CD4-positive, alpha-beta T cell (primary cell): ENCODE measurements at regions of chr1 and their contacts with region 1.

Region 1: DNA sequence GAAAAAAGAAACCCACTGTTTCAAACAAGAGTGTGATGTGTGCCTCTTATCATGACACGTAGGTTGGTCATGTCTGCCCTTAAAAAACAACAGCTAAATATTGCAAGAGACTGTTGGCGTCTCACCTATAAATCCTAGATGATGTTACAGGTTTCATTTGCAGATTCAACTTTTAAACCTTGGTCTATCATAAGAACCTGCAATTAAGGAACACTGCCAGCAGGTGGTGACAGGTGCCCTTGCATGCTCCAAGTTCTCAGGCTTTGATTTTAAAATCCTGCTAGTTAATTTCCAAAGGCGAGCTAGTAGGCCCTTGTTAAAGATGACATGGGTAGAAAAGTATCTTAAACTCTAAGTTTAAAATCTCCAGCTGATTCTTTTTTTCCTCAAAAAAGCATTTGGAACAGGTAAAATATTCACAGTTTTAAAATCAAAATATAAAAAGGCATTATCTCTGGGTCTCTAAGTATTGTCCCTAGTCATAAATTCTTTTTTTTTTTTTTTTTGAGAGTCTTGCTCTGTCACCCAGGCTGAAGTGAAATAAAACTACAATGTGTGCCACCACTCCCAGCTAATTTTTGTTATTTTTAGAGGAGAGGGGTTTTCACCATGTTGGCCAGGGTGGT is 39.1 kb downstream of the CLSTN1 start:
- DNase-seq: peak; percentile 39 to 86 (median 58)
- ATAC-seq: peak; percentile 45
- H3K4me3 ChIP-seq: no peak overlapping the region
- H3K4me3 Mint-ChIP-seq: peak overlapping the region; percentile 62
- H3K27ac ChIP-seq: no peak overlapping the region
- H3K27ac Mint-ChIP-seq: peak overlapping the region; percentile 79
- H3K4me1 ChIP-seq: peaks cover 21% of the 10 kb centered on the region
- H3K4me1 Mint-ChIP-seq: peaks cover 36% of the 10 kb centered on the region
- H3K27me3 ChIP-seq: no peaks in the 10 kb centered on the region
- H3K27me3 Mint-ChIP-seq: no peaks in the 10 kb centered on the region
- CTCF ChIP-seq: peak; percentile 83

Region 2: DNA sequence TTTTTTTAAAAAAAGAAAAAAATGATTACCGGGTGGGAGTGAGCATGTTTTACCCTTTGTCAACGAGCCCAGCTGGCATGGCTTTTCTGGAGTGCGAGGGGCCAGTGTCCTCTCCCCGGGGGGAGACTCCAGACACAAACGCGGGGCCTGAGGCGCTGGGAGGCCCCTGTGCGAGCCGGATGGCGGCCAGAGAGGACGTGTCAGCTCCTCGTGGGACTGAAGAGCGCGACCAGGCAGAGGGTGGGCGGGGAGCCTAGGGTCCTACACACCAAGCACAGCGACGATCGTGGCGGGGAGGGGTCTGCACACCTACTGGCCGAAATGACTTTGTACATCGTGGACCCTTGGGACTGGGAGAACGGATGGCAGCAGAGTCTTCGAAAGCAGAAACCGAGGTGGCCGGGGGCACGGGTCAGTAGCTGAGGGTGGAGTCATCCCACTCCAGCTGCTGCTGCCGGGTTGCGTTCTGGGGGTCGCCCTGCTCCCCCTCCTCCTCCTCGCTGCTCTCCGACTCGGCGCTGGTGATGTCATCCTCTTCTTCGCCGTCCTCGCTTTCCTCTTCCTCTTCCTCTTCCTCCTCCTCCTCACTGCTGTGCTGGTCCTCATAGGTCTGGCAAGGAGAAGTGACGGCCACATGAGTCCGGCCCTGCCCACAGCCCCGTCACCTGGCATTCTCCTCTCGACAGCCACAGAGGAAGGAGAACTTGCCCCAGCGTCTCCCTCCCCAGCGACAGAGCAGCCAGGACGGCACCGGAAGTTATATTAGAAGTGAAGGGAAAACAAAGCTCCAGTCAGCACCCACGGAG is 54.3 kb before region 1 on chr1:
- CTCF ChIA-PET with region 1: no interaction called
- POLR2A ChIA-PET with region 1: interaction called, 3 read pairs
- intact Hi-C with region 1: loop called in 1 of 2 experiments (anchors 1 kb)
- DNase-seq: peak in 3 of 14 experiments; percentile 35 to 63 (median 61)
- ATAC-seq: no peak
- H3K4me3 ChIP-seq: no peak overlapping the region
- H3K4me3 Mint-ChIP-seq: peak overlapping the region; percentile 81
- H3K27ac ChIP-seq: no peak overlapping the region
- H3K27ac Mint-ChIP-seq: peak overlapping the region; percentile 89
- H3K4me1 ChIP-seq: peaks cover 66% of the 10 kb centered on the region
- H3K4me1 Mint-ChIP-seq: peaks cover 68% of the 10 kb centered on the region
- H3K27me3 ChIP-seq: no peaks in the 10 kb centered on the region
- H3K27me3 Mint-ChIP-seq: no peaks in the 10 kb centered on the region
- CTCF ChIP-seq: no peak

Region 3: GRCh38 chr1:9798236-9799130 is 13.9 kb after region 1 on chr1:
- CTCF ChIA-PET with region 1: interaction called, 4 read pairs
- POLR2A ChIA-PET with region 1: interaction called, 16 read pairs
- intact Hi-C with region 1: no loop called
- DNase-seq: no peak
- ATAC-seq: no peak
- H3K4me3 ChIP-seq: no peak overlapping the region
- H3K4me3 Mint-ChIP-seq: peak overlapping the region; percentile 49
- H3K27ac ChIP-seq: no peak overlapping the region
- H3K27ac Mint-ChIP-seq: peak overlapping the region; percentile 57
- H3K4me1 ChIP-seq: peaks cover 43% of the 10 kb centered on the region
- H3K4me1 Mint-ChIP-seq: peaks cover 68% of the 10 kb centered on the region
- H3K27me3 ChIP-seq: no peaks in the 10 kb centered on the region
- H3K27me3 Mint-ChIP-seq: no peaks in the 10 kb centered on the region
- CTCF ChIP-seq: no peak

Region 4: GRCh38 chr1:9823943-9824701 is 39.5 kb after region 1 on chr1 and contains the start of gene CLSTN1:
- CTCF ChIA-PET with region 1: interaction called, 7 read pairs
- POLR2A ChIA-PET with region 1: interaction called, 4 read pairs
- intact Hi-C with region 1: loop called (anchors 2 kb)
- DNase-seq: peak; percentile 86 to 94 (median 90)
- ATAC-seq: peak; percentile 74
- H3K4me3 ChIP-seq: peak within 1 kb of the TSS; percentile 87
- H3K4me3 Mint-ChIP-seq: peak within 1 kb of the TSS; percentile 99
- H3K27ac ChIP-seq: peak within 1 kb of the TSS; percentile 57 to 67
- H3K27ac Mint-ChIP-seq: peak within 1 kb of the TSS; percentile 94
- H3K4me1 ChIP-seq: peaks cover 40% of the 10 kb centered on the region
- H3K4me1 Mint-ChIP-seq: peaks cover 43% of the 10 kb centered on the region
- H3K27me3 ChIP-seq: no peaks in the 10 kb centered on the region
- H3K27me3 Mint-ChIP-seq: no peaks in the 10 kb centered on the region
- CTCF ChIP-seq: no peak
- total RNA-seq, gene CLSTN1: 66.8 to 68.1 TPM

Region 5: DNA sequence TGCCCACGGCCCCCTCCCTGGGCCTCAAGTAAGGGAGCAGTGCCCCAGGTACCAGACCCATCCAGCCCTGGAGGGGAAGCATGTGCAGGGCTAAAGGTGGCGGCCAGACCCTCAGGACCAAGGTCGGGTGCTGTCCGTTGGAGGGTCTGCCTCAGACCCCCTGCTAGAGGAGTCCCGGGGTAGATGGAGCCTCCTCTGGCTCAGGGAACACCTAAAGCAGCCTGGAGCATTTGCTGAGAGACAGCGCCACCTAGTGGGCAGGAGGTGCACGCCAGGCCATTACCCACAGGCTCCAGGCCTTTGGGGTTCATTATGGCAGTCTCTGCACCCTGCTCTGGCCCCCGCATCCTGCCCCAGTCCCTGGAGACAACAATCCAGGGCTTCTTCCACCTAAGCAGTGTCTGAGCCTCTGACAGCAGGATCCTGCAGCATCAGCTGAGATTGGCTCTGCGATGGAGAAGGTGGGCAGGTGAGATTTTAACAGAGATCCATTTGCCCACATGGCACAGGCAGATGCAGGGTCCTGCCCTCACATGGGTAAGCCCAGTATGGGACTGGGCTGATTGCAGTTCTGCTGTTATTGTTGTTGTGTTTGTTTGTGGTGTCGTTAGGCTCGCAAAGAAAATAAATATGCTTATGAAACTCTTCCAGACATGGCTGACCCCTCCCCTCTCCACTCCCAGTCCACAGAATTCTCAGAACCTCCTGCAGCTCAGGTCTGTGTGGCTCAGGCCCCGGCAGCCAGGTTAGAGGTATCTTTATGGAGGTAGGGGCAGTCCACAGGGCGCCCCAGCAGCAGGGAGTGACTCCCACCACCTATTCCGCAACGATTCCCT is 83.0 kb after region 1 on chr1:
- CTCF ChIA-PET with region 1: interaction called, 70 read pairs
- POLR2A ChIA-PET with region 1: interaction called, 4 read pairs
- intact Hi-C with region 1: loop called (anchors 1 kb)
- DNase-seq: peak; percentile 80 to 94 (median 88)
- ATAC-seq: peak; percentile 100
- H3K4me3 ChIP-seq: no peak overlapping the region
- H3K4me3 Mint-ChIP-seq: no peak overlapping the region
- H3K27ac ChIP-seq: no peak overlapping the region
- H3K27ac Mint-ChIP-seq: no peak overlapping the region
- H3K4me1 ChIP-seq: peaks cover 10% of the 10 kb centered on the region
- H3K4me1 Mint-ChIP-seq: peaks cover 5% of the 10 kb centered on the region
- H3K27me3 ChIP-seq: no peaks in the 10 kb centered on the region
- H3K27me3 Mint-ChIP-seq: no peaks in the 10 kb centered on the region
- CTCF ChIP-seq: peak; percentile 94

Region 6: GRCh38 chr1:9942939-9943788 is 158.5 kb after region 1 on chr1 and contains the starts of genes LZIC and NMNAT1:
- CTCF ChIA-PET with region 1: no interaction called
- POLR2A ChIA-PET with region 1: no interaction called
- intact Hi-C with region 1: loop called in 1 of 2 experiments (anchors 10 kb)
- DNase-seq: peak; percentile 76 to 94 (median 85)
- ATAC-seq: peak; percentile 92
- H3K4me3 ChIP-seq: peak within 1 kb of the TSS; percentile 99
- H3K4me3 Mint-ChIP-seq: peak within 1 kb of the TSS; percentile 98
- H3K27ac ChIP-seq: peak within 1 kb of the TSS; percentile 73 to 90
- H3K27ac Mint-ChIP-seq: peak within 1 kb of the TSS; percentile 91
- H3K4me1 ChIP-seq: peaks cover 23% of the 10 kb centered on the region
- H3K4me1 Mint-ChIP-seq: peaks cover 20% of the 10 kb centered on the region
- H3K27me3 ChIP-seq: no peaks in the 10 kb centered on the region
- H3K27me3 Mint-ChIP-seq: no peaks in the 10 kb centered on the region
- CTCF ChIP-seq: no peak
- total RNA-seq, gene LZIC: 16.0 to 18.1 TPM
- total RNA-seq, gene NMNAT1: 0.66 to 1.0 TPM

Region 7: DNA sequence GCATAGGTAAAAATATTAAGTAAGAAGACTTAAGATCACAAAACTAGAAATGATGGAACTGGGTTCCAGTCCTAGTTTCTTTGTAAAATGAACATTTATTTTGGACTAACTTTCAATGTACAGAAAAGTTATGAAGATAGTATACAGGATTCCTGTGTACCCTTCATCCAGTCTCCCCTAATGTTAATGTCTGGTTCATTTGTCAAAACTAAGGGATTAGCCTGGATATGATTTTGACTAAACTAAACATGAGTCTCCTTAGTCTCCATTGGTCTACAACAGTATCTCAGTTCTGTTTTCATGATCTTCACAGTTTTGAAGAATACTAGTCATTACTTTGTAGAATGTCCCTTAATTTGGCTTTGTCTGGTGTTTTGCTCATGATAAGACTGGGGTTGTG is 302.6 kb after region 1 on chr1:
- CTCF ChIA-PET with region 1: no interaction called
- POLR2A ChIA-PET with region 1: no interaction called
- intact Hi-C with region 1: no loop called
- DNase-seq: no peak
- ATAC-seq: no peak
- H3K4me3 ChIP-seq: no peak overlapping the region
- H3K4me3 Mint-ChIP-seq: no peak overlapping the region
- H3K27ac ChIP-seq: no peak overlapping the region
- H3K27ac Mint-ChIP-seq: no peak overlapping the region
- H3K4me1 ChIP-seq: no peaks in the 10 kb centered on the region
- H3K4me1 Mint-ChIP-seq: peaks cover 26% of the 10 kb centered on the region
- H3K27me3 ChIP-seq: no peaks in the 10 kb centered on the region
- H3K27me3 Mint-ChIP-seq: no peaks in the 10 kb centered on the region
- CTCF ChIP-seq: no peak